ENCODE measurements at regions of chr3 and their contacts with region 1.

Region 1: DNA sequence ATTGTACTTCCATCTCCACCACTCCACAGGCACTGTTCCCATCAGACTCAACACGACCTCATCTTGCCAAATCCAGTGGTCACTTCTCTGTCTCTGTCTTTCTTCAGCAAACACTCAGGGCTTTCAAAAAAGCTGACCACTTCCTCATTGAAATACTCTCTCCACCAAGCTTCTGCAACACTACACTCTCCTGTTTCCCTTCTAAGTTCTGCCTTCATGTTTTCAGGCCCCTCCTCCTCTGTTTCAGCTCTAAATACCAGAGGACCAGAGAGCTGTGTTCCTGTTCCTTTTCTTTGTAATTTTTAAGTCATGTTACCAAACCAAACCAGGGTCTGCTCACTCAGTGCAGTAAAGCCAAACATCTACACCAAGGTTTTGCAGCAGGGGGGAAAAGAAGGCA is 33.8 kb upstream of the ACP3 start:
- DNase-seq: no peak
- H3K4me3 ChIP-seq: no peak overlapping the region
- H3K27ac ChIP-seq: no peak overlapping the region
- H3K4me1 ChIP-seq: peaks cover 10 to 22% (median 11%) of the 10 kb centered on the region in 4 experiments
- H3K27me3 ChIP-seq: no peaks in the 10 kb centered on the region
- CTCF ChIP-seq: no peak
- EP300 ChIP-seq: no peak
- POLR2A ChIP-seq: no peak
- RAD21 ChIP-seq: no peak

Region 2: GRCh38 chr3:132268956-132269355 is 14.5 kb before region 1 on chr3:
- CTCF ChIA-PET with region 1: interaction called, 33 read pairs
- POLR2A ChIA-PET with region 1: no interaction called
- DNase-seq: peak in 1 of 2 experiments; percentile 54
- H3K4me3 ChIP-seq: no peak overlapping the region
- H3K27ac ChIP-seq: no peak overlapping the region
- H3K4me1 ChIP-seq: peaks cover 0 to 3% (median 0%) of the 10 kb centered on the region in 4 experiments; a peak in 1 of 7 replicates
- H3K27me3 ChIP-seq: no peaks in the 10 kb centered on the region
- CTCF ChIP-seq: peak; percentile 34 to 68 (median 60)
- EP300 ChIP-seq: no peak
- POLR2A ChIP-seq: no peak
- RAD21 ChIP-seq: peak; percentile 29 to 59

Region 3: GRCh38 chr3:132311841-132312240 is 28.4 kb after region 1 on chr3:
- CTCF ChIA-PET with region 1: interaction called, 12 read pairs
- POLR2A ChIA-PET with region 1: no interaction called
- DNase-seq: no peak
- H3K4me3 ChIP-seq: no peak overlapping the region
- H3K27ac ChIP-seq: no peak overlapping the region
- H3K4me1 ChIP-seq: no peaks in the 10 kb centered on the region
- H3K27me3 ChIP-seq: peaks cover 0 to 2% (median 0%) of the 10 kb centered on the region in 4 experiments; a peak in 1 of 7 replicates
- CTCF ChIP-seq: no peak
- EP300 ChIP-seq: no peak
- POLR2A ChIP-seq: no peak
- RAD21 ChIP-seq: no peak; a peak in 1 of 4 replicates

Region 4: GRCh38 chr3:132386259-132386658 is 102.8 kb after region 1 on chr3:
- CTCF ChIA-PET with region 1: no interaction called
- POLR2A ChIA-PET with region 1: no interaction called
- DNase-seq: no peak
- H3K4me3 ChIP-seq: no peak overlapping the region
- H3K27ac ChIP-seq: no peak overlapping the region
- H3K4me1 ChIP-seq: peaks cover 9 to 20% (median 15%) of the 10 kb centered on the region in 4 experiments
- H3K27me3 ChIP-seq: no peaks in the 10 kb centered on the region
- CTCF ChIP-seq: no peak
- EP300 ChIP-seq: no peak
- POLR2A ChIP-seq: no peak
- RAD21 ChIP-seq: no peak